IMR-90 (cell line): ENCODE measurements at regions of chr13 and their contacts with region 1.

Region 1: DNA sequence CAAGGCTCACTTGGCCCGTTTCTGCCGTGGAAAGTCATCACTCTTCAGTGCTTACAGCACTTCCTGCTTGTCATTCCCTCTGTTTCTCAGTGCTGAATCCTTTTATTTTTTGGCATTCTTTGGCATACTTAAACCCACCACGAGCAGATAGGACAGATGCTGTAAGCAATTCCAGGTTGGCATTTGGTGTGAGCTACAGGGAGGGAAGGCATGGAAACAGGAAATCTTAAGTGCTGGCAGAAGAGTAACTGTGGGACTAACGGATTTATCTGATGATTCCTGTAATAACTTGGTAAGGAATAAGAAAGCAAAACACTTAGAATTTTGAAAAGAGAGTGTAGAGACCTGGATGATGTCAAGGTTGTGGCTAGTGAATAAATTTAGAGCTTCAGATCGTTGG is 273.4 kb downstream of the GPC6 start:
- DNase-seq: no peak
- ATAC-seq: no peak
- H3K4me3 ChIP-seq: no peak overlapping the region
- H3K27ac ChIP-seq: no peak overlapping the region
- H3K4me1 ChIP-seq: peaks cover 5% of the 10 kb centered on the region
- H3K27me3 ChIP-seq: no peaks in the 10 kb centered on the region
- CTCF ChIP-seq: no peak
- POLR2A ChIP-seq: no peak
- RAD21 ChIP-seq: no peak

Region 2: DNA sequence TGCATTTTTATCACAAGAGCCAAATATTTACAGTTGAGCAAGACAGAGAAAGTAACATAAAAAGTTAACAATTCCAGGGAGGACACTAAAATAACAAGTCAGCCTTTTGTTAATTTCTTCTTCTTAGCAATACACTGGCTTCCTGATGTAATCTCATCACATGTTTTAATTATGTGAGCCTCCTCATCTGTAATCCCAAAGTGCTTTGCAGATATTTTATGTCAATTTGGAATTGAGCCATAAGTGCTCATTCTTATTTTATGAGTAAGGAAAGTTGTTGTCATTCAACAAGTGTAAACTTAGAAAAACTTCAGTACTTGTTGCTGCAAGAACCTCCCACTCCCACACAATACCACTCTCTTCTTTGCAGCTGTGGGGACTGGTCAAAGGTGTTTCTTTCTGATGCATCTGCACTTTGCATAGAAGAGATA is 49.8 kb before region 1 on chr13:
- CTCF ChIA-PET with region 1: no interaction called
- POLR2A ChIA-PET with region 1: no interaction called
- dilution Hi-C with region 1: no loop called
- in situ Hi-C with region 1: no loop called
- intact Hi-C with region 1: loop called (anchors 5 kb)
- DNase-seq: peak; percentile 73
- ATAC-seq: peak; percentile 53
- H3K4me3 ChIP-seq: no peak overlapping the region
- H3K27ac ChIP-seq: no peak overlapping the region; the same call in 1 of the 2 replicates
- H3K4me1 ChIP-seq: no peaks in the 10 kb centered on the region; the same call in 1 of the 2 replicates
- H3K27me3 ChIP-seq: no peaks in the 10 kb centered on the region
- CTCF ChIP-seq: no peak
- POLR2A ChIP-seq: no peak
- RAD21 ChIP-seq: no peak